ENCODE measurements at regions of chr1 and their contacts with region 1.

Region 1: GRCh38 chr1:154546264-154547063 is 12.0 kb downstream of the UBE2Q1 start:
- DNase-seq: no peak
- ATAC-seq: peak; percentile 69

Region 2: GRCh38 chr1:154479764-154480421 is 66.6 kb before region 1 on chr1:
- intact Hi-C with region 1: loop called (anchors 10 kb)
- DNase-seq: peak; percentile 71
- ATAC-seq: peak; percentile 95

Region 3: GRCh38 chr1:154663471-154664060 is 117.1 kb after region 1 on chr1:
- intact Hi-C with region 1: no loop called
- DNase-seq: no peak
- ATAC-seq: no peak

Measured in sciatic nerve (tissue), 2 donors.